Caco-2 (cell line): ENCODE measurements at regions of chr11 and their contacts with region 1.

Region 1: GRCh38 chr11:94120946-94121345 is 7.7 kb upstream of the PANX1 start:
- DNase-seq: no peak
- H3K4me3 ChIP-seq: no peak overlapping the region
- H3K4me3 Mint-ChIP-seq: no peak overlapping the region
- H3K27ac Mint-ChIP-seq: no peak overlapping the region
- H3K4me1 ChIP-seq: no peaks in the 10 kb centered on the region
- H3K4me1 Mint-ChIP-seq: no peaks in the 10 kb centered on the region
- H3K27me3 ChIP-seq: no peaks in the 10 kb centered on the region
- H3K27me3 Mint-ChIP-seq: no peaks in the 10 kb centered on the region
- CTCF ChIP-seq: no peak

Region 2: DNA sequence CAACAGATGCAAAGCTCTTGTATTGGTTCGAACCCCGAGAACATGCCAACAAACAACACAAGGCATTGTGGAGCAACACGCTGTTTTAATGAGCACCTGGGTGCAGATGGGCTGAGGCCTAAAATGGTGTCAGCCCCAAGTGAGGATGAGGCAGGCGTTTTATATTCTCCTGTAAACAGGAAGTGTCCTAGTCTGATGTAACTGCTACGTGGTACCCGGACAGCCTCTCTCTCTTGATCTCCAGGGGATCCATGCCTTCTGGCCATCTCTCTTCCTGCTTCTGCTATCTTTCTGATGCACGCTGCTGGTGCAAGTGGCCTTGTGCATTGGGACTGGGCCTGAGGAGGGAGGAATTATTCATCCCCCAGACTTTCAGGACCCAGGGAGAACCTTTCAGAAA is 251.1 kb before region 1 on chr11:
- CTCF ChIA-PET with region 1: no interaction called
- POLR2A ChIA-PET with region 1: no interaction called
- intact Hi-C with region 1: no loop called
- DNase-seq: no peak
- H3K4me3 ChIP-seq: no peak overlapping the region
- H3K4me3 Mint-ChIP-seq: no peak overlapping the region
- H3K27ac Mint-ChIP-seq: no peak overlapping the region
- H3K4me1 ChIP-seq: peaks cover 15% of the 10 kb centered on the region
- H3K4me1 Mint-ChIP-seq: peaks cover 6% of the 10 kb centered on the region
- H3K27me3 ChIP-seq: no peaks in the 10 kb centered on the region
- H3K27me3 Mint-ChIP-seq: no peaks in the 10 kb centered on the region
- CTCF ChIP-seq: no peak

Region 3: GRCh38 chr11:94134651-94135512 is 13.9 kb after region 1 on chr11:
- CTCF ChIA-PET with region 1: no interaction called
- POLR2A ChIA-PET with region 1: no interaction called
- intact Hi-C with region 1: loop called (anchors 1 kb)
- DNase-seq: no peak
- H3K4me3 ChIP-seq: no peak overlapping the region
- H3K4me3 Mint-ChIP-seq: no peak overlapping the region
- H3K27ac Mint-ChIP-seq: no peak overlapping the region
- H3K4me1 ChIP-seq: peaks cover 3% of the 10 kb centered on the region; the same call in 1 of the 2 replicates
- H3K4me1 Mint-ChIP-seq: no peaks in the 10 kb centered on the region
- H3K27me3 ChIP-seq: no peaks in the 10 kb centered on the region
- H3K27me3 Mint-ChIP-seq: no peaks in the 10 kb centered on the region
- CTCF ChIP-seq: no peak